ENCODE measurements at regions of chr1 and their contacts with region 1.

Region 1: DNA sequence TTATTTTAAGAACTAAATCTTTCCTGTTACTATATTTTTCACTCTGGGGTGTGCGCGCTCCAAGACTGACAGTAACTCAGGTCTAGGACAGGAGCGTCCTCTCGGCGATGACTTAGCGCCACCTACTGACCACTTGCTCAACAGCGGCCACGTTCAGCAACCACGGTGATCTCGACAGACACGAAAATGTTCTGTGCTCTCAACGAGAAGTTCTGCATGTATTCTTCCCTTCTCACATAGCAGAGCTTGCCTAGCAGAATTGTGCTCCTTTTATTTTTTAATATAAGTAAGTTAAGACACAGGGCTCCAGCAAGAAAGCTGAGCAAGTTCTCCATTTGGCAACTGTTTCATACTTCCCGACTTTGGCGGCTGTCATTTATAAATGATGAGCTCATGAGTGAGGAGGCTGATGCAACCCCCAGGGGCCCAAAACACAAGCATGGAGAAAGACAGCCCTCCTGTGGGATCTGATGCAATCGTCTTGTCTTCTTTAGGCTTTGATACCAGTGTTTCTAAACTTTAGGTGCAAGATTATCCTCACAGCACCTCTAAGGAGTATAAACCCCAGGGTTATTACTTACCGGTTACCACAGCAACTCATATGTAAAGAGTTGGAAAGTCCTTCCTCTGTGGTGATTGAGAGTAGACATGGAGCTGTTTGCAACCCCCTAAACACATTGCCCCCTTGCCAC is 92.6 kb downstream of the HHIPL2 start:
- DNase-seq: peak; percentile 68 to 91 (median 83)
- ATAC-seq: peak; percentile 99
- H3K4me3 ChIP-seq: no peak overlapping the region
- H3K4me3 Mint-ChIP-seq: peak overlapping the region; percentile 0
- H3K27ac ChIP-seq: no peak overlapping the region
- H3K27ac Mint-ChIP-seq: peak overlapping the region; percentile 2
- H3K4me1 ChIP-seq: peaks cover 6% of the 10 kb centered on the region
- H3K4me1 Mint-ChIP-seq: peaks cover 16% of the 10 kb centered on the region
- H3K27me3 ChIP-seq: no peaks in the 10 kb centered on the region
- H3K27me3 Mint-ChIP-seq: no peaks in the 10 kb centered on the region
- CTCF ChIP-seq: peak; percentile 90

Region 2: GRCh38 chr1:220810179-220810653 is 1645.1 kb before region 1 on chr1:
- CTCF ChIA-PET with region 1: interaction called, 3 read pairs
- POLR2A ChIA-PET with region 1: no interaction called
- intact Hi-C with region 1: loop called in 1 of 2 experiments (anchors 1 kb)
- DNase-seq: peak; percentile 21 to 80 (median 70)
- ATAC-seq: peak; percentile 98
- H3K4me3 ChIP-seq: peak overlapping the region in 1 of 2 experiments; percentile 8
- H3K4me3 Mint-ChIP-seq: peak overlapping the region; percentile 75
- H3K27ac ChIP-seq: no peak overlapping the region
- H3K27ac Mint-ChIP-seq: no peak overlapping the region
- H3K4me1 ChIP-seq: no peaks in the 10 kb centered on the region
- H3K4me1 Mint-ChIP-seq: peaks cover 6% of the 10 kb centered on the region
- H3K27me3 ChIP-seq: no peaks in the 10 kb centered on the region
- H3K27me3 Mint-ChIP-seq: peaks cover 23% of the 10 kb centered on the region
- CTCF ChIP-seq: peak; percentile 92

Region 3: DNA sequence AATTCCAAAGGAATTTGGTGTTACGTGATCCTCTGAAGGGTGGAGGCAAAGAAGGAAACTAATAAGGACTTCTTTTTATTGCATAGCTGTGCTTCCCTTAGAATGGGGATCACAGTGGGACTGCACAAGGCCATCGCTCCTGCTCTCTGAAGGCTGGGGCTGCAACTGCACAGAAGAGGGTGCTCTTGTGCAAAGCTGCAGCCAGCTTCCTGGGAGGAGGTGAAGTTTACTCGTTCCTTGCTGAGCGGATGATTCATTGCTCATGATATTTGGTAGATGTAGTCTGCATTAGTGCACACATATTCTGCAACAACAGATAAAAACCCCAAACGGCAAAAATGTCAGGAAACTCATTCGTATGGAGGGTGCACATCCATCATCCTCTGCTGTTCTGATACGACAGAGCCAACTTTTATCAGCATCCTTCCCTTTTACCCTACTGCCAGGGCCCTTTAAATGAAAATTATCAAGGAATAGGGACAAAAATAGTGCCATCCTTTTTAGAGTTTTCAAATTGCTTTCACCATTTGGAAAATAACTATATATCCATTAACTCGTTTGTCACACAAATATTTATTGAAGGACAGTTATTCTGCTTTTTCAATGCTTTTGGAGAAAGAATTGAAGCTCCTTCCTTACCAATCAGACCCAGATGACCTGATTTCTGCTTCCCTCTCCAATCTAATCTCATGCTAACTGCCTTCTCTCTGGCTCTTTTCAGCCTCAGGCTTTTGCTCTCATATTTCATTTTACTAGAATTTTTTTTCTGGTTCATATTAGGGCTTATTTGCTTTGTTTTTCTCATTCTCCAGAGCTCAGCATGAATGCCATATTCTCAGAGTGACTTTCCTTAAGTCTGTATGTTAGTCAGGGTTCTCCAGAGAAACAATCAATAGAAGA is 977.0 kb before region 1 on chr1:
- CTCF ChIA-PET with region 1: interaction called, 26 read pairs
- POLR2A ChIA-PET with region 1: no interaction called
- intact Hi-C with region 1: loop called (anchors 1 kb)
- DNase-seq: peak; percentile 16 to 74 (median 51)
- ATAC-seq: peak; percentile 69
- H3K4me3 ChIP-seq: no peak overlapping the region
- H3K4me3 Mint-ChIP-seq: no peak overlapping the region
- H3K27ac ChIP-seq: no peak overlapping the region
- H3K27ac Mint-ChIP-seq: no peak overlapping the region
- H3K4me1 ChIP-seq: no peaks in the 10 kb centered on the region
- H3K4me1 Mint-ChIP-seq: peaks cover 2% of the 10 kb centered on the region
- H3K27me3 ChIP-seq: peaks cover 0 to 2% of the 10 kb centered on the region in 2 experiments
- H3K27me3 Mint-ChIP-seq: peaks cover 6% of the 10 kb centered on the region
- CTCF ChIP-seq: peak; percentile 29

Region 4: GRCh38 chr1:222009105-222009730 is 446.1 kb before region 1 on chr1:
- CTCF ChIA-PET with region 1: interaction called, 17 read pairs
- POLR2A ChIA-PET with region 1: no interaction called
- intact Hi-C with region 1: loop called (anchors 1 to 10 kb)
- DNase-seq: peak in 8 of 9 experiments; percentile 3 to 65 (median 17)
- ATAC-seq: peak; percentile 57
- H3K4me3 ChIP-seq: no peak overlapping the region
- H3K4me3 Mint-ChIP-seq: no peak overlapping the region
- H3K27ac ChIP-seq: no peak overlapping the region
- H3K27ac Mint-ChIP-seq: no peak overlapping the region
- H3K4me1 ChIP-seq: no peaks in the 10 kb centered on the region
- H3K4me1 Mint-ChIP-seq: no peaks in the 10 kb centered on the region
- H3K27me3 ChIP-seq: no peaks in the 10 kb centered on the region
- H3K27me3 Mint-ChIP-seq: no peaks in the 10 kb centered on the region
- CTCF ChIP-seq: peak; percentile 60

Region 5: DNA sequence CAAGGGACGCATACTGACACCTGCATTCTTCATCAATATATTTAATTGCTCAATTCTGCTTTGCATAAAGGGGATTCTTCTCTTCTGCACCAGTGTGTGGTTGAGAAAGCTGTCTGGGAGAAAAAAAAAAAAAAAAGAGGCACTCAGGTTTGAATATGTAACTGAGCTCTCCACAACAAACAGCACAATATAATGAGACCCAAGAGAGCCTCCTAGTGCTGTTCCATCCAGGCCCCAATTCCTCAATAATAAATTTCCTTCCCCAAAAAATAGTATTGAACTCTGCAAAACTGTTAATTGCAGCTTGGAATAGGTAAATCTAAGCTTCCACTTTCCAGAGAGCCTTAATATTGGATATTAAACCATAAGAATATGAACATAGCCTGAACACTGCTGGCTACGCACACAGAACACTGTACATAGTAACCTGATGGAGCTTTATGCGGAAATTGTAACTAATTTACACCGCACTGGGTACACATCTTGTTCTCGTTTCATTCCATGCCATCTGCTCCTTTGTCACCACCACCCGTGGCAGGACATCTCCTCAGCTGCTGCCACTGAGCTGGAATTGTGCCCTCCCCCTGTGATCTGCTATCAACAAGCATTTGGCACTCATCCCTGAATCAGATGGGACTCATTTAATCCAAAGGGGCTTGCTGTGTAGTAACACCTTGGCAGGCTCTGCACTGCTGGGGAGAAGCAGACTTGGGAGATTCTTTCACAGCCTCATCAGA is 179.4 kb before region 1 on chr1:
- CTCF ChIA-PET with region 1: interaction called, 13 read pairs
- POLR2A ChIA-PET with region 1: no interaction called
- intact Hi-C with region 1: no loop called
- DNase-seq: no peak
- ATAC-seq: no peak
- H3K4me3 ChIP-seq: no peak overlapping the region
- H3K4me3 Mint-ChIP-seq: no peak overlapping the region
- H3K27ac ChIP-seq: no peak overlapping the region
- H3K27ac Mint-ChIP-seq: no peak overlapping the region
- H3K4me1 ChIP-seq: no peaks in the 10 kb centered on the region
- H3K4me1 Mint-ChIP-seq: no peaks in the 10 kb centered on the region
- H3K27me3 ChIP-seq: no peaks in the 10 kb centered on the region
- H3K27me3 Mint-ChIP-seq: no peaks in the 10 kb centered on the region
- CTCF ChIP-seq: no peak

Region 6: GRCh38 chr1:222441066-222441465 is 14.3 kb before region 1 on chr1:
- CTCF ChIA-PET with region 1: interaction called, 85 read pairs
- POLR2A ChIA-PET with region 1: interaction called, 4 read pairs
- intact Hi-C with region 1: no loop called
- DNase-seq: no peak
- ATAC-seq: no peak
- H3K4me3 ChIP-seq: no peak overlapping the region
- H3K4me3 Mint-ChIP-seq: no peak overlapping the region
- H3K27ac ChIP-seq: no peak overlapping the region
- H3K27ac Mint-ChIP-seq: no peak overlapping the region
- H3K4me1 ChIP-seq: peaks cover 9% of the 10 kb centered on the region
- H3K4me1 Mint-ChIP-seq: peaks cover 25% of the 10 kb centered on the region
- H3K27me3 ChIP-seq: no peaks in the 10 kb centered on the region
- H3K27me3 Mint-ChIP-seq: no peaks in the 10 kb centered on the region
- CTCF ChIP-seq: no peak

Region 7: GRCh38 chr1:223538981-223539380 is 1083.6 kb after region 1 on chr1:
- CTCF ChIA-PET with region 1: no interaction called
- POLR2A ChIA-PET with region 1: no interaction called
- intact Hi-C with region 1: no loop called
- DNase-seq: no peak
- ATAC-seq: no peak
- H3K4me3 ChIP-seq: no peak overlapping the region
- H3K4me3 Mint-ChIP-seq: no peak overlapping the region
- H3K27ac ChIP-seq: no peak overlapping the region
- H3K27ac Mint-ChIP-seq: no peak overlapping the region
- H3K4me1 ChIP-seq: no peaks in the 10 kb centered on the region
- H3K4me1 Mint-ChIP-seq: no peaks in the 10 kb centered on the region
- H3K27me3 ChIP-seq: no peaks in the 10 kb centered on the region
- H3K27me3 Mint-ChIP-seq: peaks cover 7% of the 10 kb centered on the region
- CTCF ChIP-seq: no peak

Measured in CD8-positive, alpha-beta T cell (primary cell).